Head of caudate nucleus (tissue), 42 donors: ENCODE measurements at regions of chrX and their contacts with region 1.

Region 1: DNA sequence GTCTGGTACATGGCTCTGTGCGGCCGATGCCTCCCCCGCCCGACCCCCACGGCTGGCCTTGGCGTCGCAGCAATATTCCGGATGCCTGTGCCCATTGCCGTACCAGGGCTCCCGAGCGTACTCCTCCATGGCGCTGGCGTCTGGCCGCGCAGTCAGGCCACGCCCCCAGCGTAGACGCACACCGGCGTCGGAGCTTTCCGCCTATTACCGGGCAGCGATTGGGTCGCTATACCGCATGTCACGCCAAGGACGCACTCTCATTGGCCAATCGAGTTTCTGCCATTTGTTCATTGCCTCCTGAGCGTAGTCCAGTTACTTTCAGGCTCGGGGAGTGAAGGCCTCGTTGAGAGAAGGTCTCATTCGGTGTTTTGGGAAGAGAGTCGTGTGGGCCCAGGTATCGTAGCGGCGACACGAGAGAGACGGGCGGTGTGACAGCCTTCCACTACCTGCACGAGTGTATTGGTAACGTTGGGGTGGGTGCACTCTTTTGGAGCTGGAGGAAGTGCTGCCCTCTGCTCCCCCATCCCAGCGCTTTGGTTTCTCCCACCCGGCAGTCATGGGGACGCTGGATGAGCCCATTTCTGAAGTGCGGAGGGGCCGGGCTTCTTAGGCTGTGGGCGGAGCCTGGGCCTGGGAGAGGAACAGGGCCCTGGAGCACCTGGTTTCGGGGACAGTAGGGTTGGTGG is at the starts of genes PQBP1 and TIMM17B:
- DNase-seq: peak; percentile 84 to 96 (median 92)

Region 2: DNA sequence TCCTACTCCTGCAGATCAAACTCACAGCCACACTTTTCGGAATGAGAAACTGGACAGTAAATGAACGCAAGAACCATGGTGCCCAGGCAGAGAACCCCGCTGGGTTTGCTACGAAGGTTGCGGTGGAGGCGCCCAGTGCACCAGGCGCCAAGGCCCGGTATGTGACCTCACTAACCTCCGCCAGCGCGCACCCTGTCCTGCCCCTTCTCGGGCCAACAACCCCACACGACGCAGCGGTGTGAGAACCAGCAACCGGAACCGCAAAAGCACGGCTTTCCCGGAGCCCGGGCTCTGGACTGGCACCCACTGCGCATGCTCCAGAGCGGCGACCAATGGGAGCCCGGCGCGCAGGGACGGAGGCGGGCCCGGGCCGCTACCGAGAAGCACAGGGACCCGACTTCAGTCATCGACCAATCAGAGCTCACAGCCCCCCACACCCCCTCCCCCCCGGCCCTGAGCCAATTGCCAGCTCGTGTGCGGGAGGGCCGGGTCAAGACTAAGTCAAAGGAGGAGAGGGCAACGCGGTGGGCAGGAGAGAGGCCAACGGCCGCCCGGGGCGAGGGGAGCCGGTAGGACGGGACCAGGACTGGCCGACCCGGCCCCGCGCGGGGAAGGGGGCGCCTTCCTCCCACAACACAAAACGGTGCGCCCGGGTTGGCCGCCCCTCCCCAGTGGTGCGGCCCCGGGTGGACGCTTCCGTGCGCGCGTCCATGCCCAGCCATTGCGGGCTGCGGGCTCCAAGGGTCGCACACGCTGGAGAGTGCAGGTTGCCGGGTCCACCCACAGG is 221.5 kb before region 1 on chrX:
- intact Hi-C with region 1: loop called (anchors 10 kb)
- DNase-seq: peak; percentile 68 to 93 (median 86)